ENCODE measurements at regions of chr1 and their contacts with region 1.

Region 1: GRCh38 chr1:155208541-155209311 is at the start of gene MTX1:
- DNase-seq: peak; percentile 68 to 93 (median 90)
- ATAC-seq: peak; percentile 86 to 89 (median 88)
- H3K4me3 ChIP-seq: peak within 1 kb of the TSS; percentile 87 to 91
- H3K4me3 Mint-ChIP-seq: peak within 1 kb of the TSS; percentile 80 to 85 (median 84)
- H3K27ac ChIP-seq: peak within 1 kb of the TSS; percentile 100
- H3K27ac Mint-ChIP-seq: peak within 1 kb of the TSS; percentile 88 to 94
- H3K4me1 ChIP-seq: peaks cover 9 to 30% of the 10 kb centered on the region in 2 experiments
- H3K4me1 Mint-ChIP-seq: peaks cover 18 to 22% (median 19%) of the 10 kb centered on the region in 3 donors
- H3K27me3 ChIP-seq: no peaks in the 10 kb centered on the region
- H3K27me3 Mint-ChIP-seq: no peaks in the 10 kb centered on the region
- total RNA-seq, gene MTX1: 20.4 to 28.4 (median 25.1) TPM

Region 2: DNA sequence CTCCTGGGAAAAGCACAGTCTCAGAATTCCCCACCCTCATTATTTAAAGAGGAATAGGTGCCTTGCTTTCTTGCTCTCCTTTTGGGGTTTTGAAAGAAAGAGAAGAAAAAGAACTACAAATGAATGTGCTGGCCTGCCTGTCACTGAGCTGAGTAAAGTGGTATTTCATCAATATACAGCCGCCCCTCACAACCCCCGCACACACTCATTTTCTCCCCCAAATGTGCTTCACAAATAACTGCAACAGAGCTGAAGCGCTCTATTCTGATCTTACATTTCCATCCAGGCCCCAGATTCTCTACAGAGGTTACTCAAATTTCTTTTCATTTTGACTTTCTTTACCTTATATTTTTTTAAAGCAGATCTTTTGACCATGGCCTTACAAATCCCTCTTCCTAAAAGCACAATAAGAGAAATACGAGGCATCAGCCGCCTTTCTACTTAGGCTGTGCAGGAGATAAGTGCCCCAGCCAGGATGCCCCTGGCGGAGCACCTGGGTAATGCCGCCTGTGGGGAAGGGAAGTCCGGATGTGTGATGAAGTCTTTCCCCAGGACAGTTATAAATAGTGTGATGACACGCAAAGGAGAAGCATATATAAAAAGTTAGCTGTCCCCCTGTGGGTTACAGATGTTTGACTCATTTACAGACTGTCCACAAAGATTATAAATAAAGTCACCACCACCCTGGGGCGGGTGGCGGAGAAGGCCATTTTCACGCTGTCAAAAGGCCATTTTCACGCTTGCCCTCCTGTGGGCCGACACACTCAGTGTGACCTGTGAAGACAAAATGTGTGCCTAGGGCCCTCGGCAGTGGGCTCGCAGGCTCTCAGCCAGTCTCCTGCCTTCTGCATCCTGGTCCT is 345.2 kb before region 1 on chr1:
- CTCF ChIA-PET with region 1: no interaction called
- POLR2A ChIA-PET with region 1: no interaction called
- DNase-seq: peak in 10 of 35 experiments; percentile 6 to 47 (median 16)
- ATAC-seq: peak in 2 of 4 experiments; percentile 45 to 50
- H3K4me3 ChIP-seq: no peak overlapping the region
- H3K4me3 Mint-ChIP-seq: no peak overlapping the region
- H3K27ac ChIP-seq: no peak overlapping the region
- H3K27ac Mint-ChIP-seq: no peak overlapping the region
- H3K4me1 ChIP-seq: no peaks in the 10 kb centered on the region
- H3K4me1 Mint-ChIP-seq: peaks cover 0 to 18% (median 1%) of the 10 kb centered on the region in 3 donors
- H3K27me3 ChIP-seq: peaks cover 0 to 73% of the 10 kb centered on the region in 2 experiments
- H3K27me3 Mint-ChIP-seq: peaks cover 13 to 36% of the 10 kb centered on the region in 2 donors

Region 3: DNA sequence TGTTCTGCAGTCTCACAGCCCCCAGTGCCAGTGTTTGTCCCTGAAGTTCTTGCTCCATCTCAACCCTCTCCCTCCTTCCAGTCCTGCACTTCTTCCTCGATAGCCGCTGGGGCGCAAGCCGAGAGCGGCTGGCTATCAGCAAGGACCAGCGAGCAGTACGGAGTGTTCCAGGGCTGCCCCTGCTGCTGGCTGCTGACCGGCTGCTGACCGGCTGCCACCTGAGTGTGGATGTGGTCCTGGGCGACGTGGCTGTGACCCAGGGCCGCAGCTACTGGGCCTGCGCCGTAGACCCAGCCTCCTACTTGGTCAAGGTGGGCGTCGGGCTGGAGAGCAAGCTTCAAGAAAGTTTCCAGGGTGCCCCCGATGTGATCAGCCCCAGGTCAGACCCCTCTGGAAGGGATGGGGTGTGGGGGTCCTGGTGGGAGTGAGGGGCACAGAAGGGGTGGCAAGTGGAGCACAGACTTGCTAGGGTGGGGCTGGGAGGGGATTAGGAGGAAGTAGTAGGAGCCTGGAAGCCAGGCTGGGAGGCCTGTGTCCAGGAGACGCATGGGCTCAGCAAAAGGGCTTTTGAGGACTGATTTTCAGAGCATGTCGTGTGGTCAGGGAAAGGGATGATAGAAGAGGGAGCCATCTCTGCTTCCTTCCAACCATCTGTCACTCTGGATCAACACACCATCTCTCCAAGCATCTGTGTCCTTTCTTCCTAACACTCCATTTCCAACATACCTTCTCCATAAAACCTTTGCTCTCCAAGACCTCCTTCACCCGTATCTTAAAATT is 26.8 kb before region 1 on chr1:
- CTCF ChIA-PET with region 1: no interaction called
- POLR2A ChIA-PET with region 1: no interaction called
- DNase-seq: no peak
- ATAC-seq: no peak
- H3K4me3 ChIP-seq: no peak overlapping the region
- H3K4me3 Mint-ChIP-seq: no peak overlapping the region
- H3K27ac ChIP-seq: no peak overlapping the region
- H3K27ac Mint-ChIP-seq: no peak overlapping the region
- H3K4me1 ChIP-seq: peaks cover 0 to 4% of the 10 kb centered on the region in 2 experiments
- H3K4me1 Mint-ChIP-seq: peaks cover under 1 to 2% (median 1%) of the 10 kb centered on the region in 3 donors
- H3K27me3 ChIP-seq: no peaks in the 10 kb centered on the region
- H3K27me3 Mint-ChIP-seq: no peaks in the 10 kb centered on the region

Region 4: DNA sequence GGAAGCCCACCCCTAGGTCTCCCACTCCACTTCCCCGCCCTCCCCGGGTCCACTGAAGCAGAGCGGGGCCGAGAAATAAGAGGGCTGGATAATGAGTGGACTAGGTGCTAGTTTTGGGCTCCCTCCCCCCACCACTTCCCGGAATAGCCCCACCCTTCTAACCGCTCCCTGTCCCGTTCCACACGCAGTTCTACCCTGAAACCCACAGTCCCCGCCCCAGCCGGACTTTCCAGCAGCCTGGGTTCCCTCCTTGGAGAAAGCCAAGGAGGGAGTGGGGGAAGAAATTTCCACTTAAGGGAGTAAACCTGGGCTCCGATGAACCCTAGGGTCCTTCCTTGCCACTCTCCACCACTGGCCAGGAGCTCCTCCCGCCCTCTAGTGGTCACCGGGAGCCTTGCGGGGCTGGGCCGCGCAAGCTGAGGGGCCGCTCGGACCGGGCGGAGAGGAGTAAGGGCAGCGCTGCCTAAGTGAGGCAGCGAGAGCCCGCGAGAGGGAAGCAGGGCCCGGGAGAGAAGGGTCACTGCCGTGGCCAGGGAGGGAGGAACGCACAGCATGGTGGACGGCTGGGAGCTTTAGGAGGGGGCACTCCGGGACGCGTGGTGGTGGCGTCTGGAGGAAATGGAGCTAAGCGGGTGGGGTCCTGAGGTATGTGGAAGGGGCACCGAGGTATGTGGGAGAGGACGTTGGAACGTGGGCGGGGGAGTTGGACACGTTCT is 15.3 kb before region 1 on chr1:
- CTCF ChIA-PET with region 1: interaction called, 4 to 21 read pairs
- POLR2A ChIA-PET with region 1: interaction called, 3 to 9 read pairs
- DNase-seq: peak in 27 of 35 experiments; percentile 33 to 76 (median 49)
- ATAC-seq: peak in 3 of 4 experiments; percentile 37 to 52 (median 41)
- H3K4me3 ChIP-seq: peak overlapping the region; percentile 48 to 76
- H3K4me3 Mint-ChIP-seq: peak overlapping the region; percentile 77 to 91 (median 86)
- H3K27ac ChIP-seq: peak overlapping the region; percentile 86
- H3K27ac Mint-ChIP-seq: peak overlapping the region; percentile 93 to 96
- H3K4me1 ChIP-seq: peaks cover 8 to 38% of the 10 kb centered on the region in 2 experiments
- H3K4me1 Mint-ChIP-seq: peaks cover 21 to 37% (median 29%) of the 10 kb centered on the region in 3 donors
- H3K27me3 ChIP-seq: no peaks in the 10 kb centered on the region
- H3K27me3 Mint-ChIP-seq: no peaks in the 10 kb centered on the region

Region 5: GRCh38 chr1:155227261-155228095 is 18.8 kb after region 1 on chr1:
- CTCF ChIA-PET with region 1: interaction called, 12 to 16 read pairs
- POLR2A ChIA-PET with region 1: no interaction called
- DNase-seq: peak; percentile 93 to 100 (median 97)
- ATAC-seq: peak; percentile 94 to 97 (median 96)
- H3K4me3 ChIP-seq: peak overlapping the region; percentile 66 to 81
- H3K4me3 Mint-ChIP-seq: peak overlapping the region; percentile 85 to 93 (median 85)
- H3K27ac ChIP-seq: peak overlapping the region; percentile 87
- H3K27ac Mint-ChIP-seq: peak overlapping the region; percentile 87 to 95
- H3K4me1 ChIP-seq: peaks cover 9 to 24% of the 10 kb centered on the region in 2 experiments
- H3K4me1 Mint-ChIP-seq: peaks cover 22 to 32% (median 31%) of the 10 kb centered on the region in 3 donors
- H3K27me3 ChIP-seq: no peaks in the 10 kb centered on the region
- H3K27me3 Mint-ChIP-seq: no peaks in the 10 kb centered on the region